Left colon (tissue), 2 donors: ENCODE measurements at regions of chr4 and their contacts with region 1.

Region 1: GRCh38 chr4:6720202-6720699 is 4.3 kb downstream of the BLOC1S4 start:
- DNase-seq: peak; percentile 74 to 88
- ATAC-seq: peak; percentile 53

Region 2: DNA sequence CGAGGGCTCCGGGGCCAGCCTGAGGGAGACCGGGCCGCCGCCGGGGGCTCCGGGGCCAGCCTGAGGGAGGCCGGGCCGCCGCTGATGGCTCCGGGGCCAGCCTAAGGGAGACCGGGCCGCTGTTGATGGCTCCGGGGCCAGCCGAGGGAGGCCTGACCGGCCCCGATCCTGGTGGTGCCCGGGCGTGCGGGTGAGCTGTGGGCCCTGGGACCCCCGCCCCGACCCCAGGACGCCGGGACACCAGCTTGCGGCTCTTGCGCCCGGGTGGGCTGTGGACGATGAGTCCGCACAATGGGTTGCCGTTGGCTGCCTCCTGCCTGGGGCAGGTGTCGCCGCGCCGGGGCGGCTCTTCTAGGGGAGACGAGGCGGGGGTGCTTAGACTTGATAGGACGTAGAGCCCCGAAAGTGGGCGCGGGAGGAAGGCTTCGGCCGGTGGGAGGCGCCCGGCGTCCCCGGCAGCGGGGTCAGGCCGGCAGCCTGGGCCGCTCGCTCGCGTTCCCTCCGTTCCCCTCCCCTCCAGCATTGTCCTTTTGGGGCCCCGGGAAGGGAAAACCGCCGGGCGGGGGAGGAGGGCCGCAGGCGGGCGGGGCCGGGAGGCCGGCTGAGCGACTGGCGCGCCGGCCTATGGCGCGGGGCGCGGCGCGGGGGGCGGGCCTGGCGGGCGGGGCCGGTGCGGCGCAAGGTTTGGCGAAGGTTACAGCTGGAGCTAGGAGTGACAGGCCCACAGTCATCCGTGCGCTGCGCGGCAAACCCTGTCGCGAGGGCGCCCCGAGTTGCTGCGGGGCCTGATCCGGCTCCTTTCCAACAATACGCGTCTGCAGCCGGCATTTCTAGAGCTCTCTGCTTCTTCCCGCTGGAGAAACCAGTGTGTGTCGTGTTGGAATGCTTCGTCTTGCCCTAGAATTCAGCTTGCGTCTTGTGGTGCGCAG is 63.1 kb after region 1 on chr4:
- intact Hi-C with region 1: loop called in 1 of 2 experiments (anchors 5 kb)
- DNase-seq: peak; percentile 86 to 92
- ATAC-seq: peak; percentile 79

Region 3: DNA sequence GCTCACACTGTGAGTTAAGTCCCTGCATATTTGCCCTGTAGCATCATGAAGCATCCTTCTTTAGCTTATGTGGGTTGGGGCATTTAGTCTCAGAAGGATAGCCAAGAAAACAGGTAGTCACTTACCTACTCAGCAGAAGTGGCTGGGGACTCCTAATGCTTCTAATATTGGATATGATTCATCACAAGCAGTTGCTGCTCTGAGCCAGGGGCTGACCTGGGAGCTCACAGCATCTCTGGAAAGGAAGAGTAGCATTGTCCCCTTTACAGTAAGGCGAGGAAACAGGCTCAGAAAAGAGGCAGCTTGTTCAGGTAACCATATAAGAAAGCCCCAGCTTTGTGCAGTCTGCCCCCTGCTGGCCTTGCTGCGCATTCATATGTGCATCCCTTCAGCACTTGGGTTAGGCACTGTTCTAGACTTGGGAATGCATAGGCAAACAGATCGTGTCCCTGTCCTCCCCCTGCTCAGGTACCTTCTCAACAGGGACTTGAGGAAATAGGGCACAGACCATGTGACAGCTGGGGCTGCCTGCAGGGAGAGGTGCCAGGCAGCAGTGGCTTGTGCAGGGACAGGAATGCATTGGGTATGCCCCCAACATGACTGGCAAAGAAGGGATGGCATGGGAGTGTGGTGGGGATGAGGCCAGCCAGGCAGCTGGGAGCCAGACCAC is 153.7 kb after region 1 on chr4:
- intact Hi-C with region 1: loop called (anchors 2 to 10 kb)
- DNase-seq: peak; percentile 64 to 86
- ATAC-seq: peak; percentile 87

Region 4: DNA sequence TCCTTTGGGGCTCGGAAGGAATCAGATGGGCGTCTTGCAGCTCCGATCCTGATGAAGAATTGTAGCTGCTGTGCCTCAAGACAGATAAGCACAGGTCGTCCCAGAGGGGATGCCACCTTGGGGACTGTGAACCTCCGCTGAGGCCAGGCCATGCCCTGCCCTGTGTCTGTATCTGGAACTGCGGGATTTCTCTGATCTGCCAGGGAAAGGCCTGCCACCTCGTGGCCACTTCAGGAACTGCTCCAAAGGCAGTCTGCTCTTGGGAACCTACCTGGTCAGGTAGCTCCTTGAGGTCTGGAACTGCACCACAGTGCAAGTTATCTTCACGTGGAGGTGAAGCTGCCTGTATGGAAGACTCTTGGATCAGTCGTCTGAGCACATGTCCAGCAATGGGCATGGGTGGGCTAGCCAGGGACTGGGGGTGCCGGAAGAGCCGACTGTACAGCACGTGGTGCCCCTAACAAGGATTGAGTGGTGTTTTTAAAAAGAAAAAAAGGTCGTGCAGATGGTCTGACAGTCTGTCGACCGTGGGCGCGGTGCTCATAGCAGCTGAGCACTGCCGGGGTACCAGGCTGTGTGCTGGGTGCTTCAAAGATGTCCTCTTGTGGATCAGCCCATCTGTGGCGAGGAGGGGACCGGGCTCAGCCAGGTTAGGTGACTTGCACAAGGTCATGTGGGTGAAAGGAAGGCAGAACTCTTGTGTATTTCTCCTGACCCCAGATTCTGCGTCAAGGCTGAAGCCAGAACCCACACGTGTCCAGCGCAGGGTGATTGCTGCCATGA is 350.7 kb after region 1 on chr4:
- intact Hi-C with region 1: loop called in 1 of 2 experiments (anchors 10 kb)
- DNase-seq: peak; percentile 71 to 89
- ATAC-seq: peak; percentile 34